Natural killer cell (primary cell): ENCODE measurements at regions of chr11 and their contacts with region 1.

Region 1: DNA sequence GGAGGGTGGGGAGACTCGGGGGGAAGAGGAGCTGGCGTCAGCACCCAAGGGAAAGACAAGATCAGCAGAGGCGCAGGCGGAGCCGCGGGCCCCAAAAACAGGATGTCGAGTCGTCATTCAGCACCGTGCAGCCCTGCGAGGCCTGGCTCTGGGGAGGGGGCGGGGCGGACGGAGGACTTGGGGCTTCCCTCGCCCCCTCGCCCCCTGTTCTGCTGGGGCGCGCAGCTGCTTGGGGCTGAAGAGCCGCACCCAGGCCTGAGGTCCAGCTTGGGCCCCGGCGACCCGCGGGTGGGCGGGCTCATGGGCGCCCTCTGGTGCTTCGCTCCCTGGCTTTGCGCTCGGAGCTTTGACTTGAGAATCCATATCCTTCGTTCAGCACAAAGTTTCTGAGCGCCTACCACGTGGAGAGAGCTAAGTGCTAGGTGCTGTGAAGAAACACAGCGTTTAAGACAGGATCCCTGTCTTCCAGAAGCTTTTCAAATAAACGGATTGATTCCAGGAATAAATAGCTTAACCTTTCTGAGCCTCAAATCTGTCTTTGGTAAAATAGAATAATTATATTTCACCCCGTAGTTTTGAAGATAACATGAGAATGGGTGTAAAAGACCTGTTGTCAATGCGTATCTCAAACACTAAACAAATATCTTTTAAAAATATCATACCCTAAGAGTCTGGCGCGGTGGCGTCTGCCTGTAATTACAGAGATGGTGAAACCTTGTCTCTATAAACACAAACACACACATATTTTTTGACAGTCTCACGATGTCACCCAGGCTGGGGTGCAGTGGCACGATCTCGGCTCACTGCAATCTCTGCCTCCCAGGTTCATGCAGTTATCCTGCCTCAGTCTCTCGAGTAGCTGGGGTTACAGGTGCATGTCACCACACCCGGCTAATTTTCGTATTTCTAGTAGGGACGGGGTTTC is 929 bp upstream of the RHOG start:
- DNase-seq: peak; percentile 89 to 97
- ATAC-seq: peak in 1 of 3 donors; percentile 86
- H3K4me3 ChIP-seq: peak overlapping the region; percentile 38
- H3K4me3 Mint-ChIP-seq: peak overlapping the region; percentile 90
- H3K27ac ChIP-seq: peak overlapping the region; percentile 97
- H3K27ac Mint-ChIP-seq: peak overlapping the region; percentile 90 to 95
- H3K4me1 ChIP-seq: peaks cover 43% of the 10 kb centered on the region
- H3K4me1 Mint-ChIP-seq: peaks cover 31 to 38% of the 10 kb centered on the region in 2 donors
- H3K27me3 ChIP-seq: no peaks in the 10 kb centered on the region
- H3K27me3 Mint-ChIP-seq: no peaks in the 10 kb centered on the region
- CTCF ChIP-seq: peak; percentile 77

Region 2: GRCh38 chr11:3797329-3798095 is 44.2 kb before region 1 on chr11 and contains the start of gene NUP98:
- intact Hi-C with region 1: loop called (anchors 1 kb)
- DNase-seq: peak; percentile 100
- ATAC-seq: peak; percentile 89 to 98 (median 91)
- H3K4me3 ChIP-seq: peak within 1 kb of the TSS; percentile 97
- H3K4me3 Mint-ChIP-seq: peak within 1 kb of the TSS; percentile 96
- H3K27ac ChIP-seq: peak within 1 kb of the TSS; percentile 99
- H3K27ac Mint-ChIP-seq: peak within 1 kb of the TSS; percentile 97 to 99
- H3K4me1 ChIP-seq: peaks cover 22% of the 10 kb centered on the region
- H3K4me1 Mint-ChIP-seq: peaks cover 34 to 37% of the 10 kb centered on the region in 2 donors
- H3K27me3 ChIP-seq: no peaks in the 10 kb centered on the region
- H3K27me3 Mint-ChIP-seq: no peaks in the 10 kb centered on the region
- CTCF ChIP-seq: no peak
- total RNA-seq, gene NUP98: 88.5 to 103 (median 92.8) TPM

Region 3: DNA sequence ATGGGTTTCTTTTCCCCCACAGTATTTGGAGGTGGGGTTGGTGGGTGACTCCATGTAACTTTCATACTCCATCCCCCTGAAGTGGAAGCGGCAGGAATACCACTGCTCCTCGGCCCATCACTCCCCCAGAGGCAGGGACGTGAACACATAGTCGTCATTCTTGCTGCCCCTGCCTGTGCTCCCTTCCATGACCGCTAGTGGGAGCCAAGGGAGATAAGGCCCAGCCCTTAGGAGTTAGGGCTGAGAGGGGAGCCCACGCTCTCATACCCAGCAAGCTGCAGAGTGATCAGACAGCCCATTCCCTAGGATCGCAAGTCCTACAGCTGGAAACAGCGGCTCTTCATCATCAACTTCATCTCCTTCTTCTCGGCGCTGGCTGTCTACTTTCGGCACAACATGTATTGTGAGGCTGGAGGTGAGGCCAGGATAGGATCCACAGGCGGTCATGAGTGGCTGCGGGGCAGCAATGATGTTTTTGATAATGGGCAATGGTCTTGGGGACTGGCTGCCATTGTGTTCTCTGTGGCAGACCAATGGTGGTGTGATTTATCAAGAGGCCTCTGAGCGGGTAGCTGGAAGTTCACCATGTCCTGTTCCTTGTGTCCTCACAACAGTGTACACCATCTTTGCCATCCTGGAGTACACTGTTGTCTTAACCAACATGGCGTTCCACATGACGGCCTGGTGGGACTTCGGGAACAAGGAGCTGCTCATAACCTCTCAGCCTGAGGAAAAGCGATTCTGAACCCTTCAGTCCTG is 16.8 kb before region 1 on chr11:
- intact Hi-C with region 1: loop called (anchors 2 kb)
- DNase-seq: peak; percentile 75 to 90
- ATAC-seq: peak; percentile 95 to 99 (median 96)
- H3K4me3 ChIP-seq: no peak overlapping the region
- H3K4me3 Mint-ChIP-seq: no peak overlapping the region
- H3K27ac ChIP-seq: peak overlapping the region; percentile 19
- H3K27ac Mint-ChIP-seq: peak overlapping the region; percentile 81 to 85
- H3K4me1 ChIP-seq: peaks cover 20% of the 10 kb centered on the region
- H3K4me1 Mint-ChIP-seq: peaks cover 36 to 37% of the 10 kb centered on the region in 2 donors
- H3K27me3 ChIP-seq: no peaks in the 10 kb centered on the region
- H3K27me3 Mint-ChIP-seq: no peaks in the 10 kb centered on the region
- CTCF ChIP-seq: peak; percentile 77

Region 4: DNA sequence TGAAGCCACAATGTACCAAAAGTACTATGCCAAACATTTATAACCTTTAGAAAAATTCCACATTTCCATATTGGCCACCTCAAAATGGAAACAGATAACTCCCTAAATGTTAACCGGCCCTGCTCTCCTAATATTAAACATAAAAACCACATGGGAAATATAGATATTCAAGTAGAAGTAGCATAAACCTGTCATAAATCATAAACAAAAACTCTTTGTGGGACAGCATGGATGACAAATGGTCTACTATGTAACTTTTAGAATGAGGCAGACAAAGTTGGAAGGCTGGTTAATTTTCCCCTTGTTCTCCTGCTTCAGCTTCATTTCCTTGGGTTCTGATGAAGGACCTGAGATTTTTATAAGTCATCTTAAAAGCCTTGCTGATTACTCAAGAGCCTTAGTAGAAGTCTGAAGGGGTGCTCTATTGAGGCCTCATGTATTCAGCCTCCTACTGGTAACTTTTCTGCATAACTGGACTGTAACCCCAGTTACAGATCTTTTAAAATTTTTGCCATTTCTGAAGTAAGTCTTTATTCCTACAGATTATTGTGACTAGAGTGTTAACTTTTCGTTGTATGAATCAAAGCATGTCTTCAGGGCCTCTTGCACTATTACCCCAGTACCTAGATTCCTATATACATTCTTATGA is 130.2 kb after region 1 on chr11:
- intact Hi-C with region 1: no loop called
- DNase-seq: peak in 1 of 2 donors; percentile 29
- ATAC-seq: peak in 2 of 3 donors; percentile 70 to 80
- H3K4me3 ChIP-seq: no peak overlapping the region
- H3K4me3 Mint-ChIP-seq: peak overlapping the region; percentile 22
- H3K27ac ChIP-seq: no peak overlapping the region
- H3K27ac Mint-ChIP-seq: peak overlapping the region; percentile 77 to 85
- H3K4me1 ChIP-seq: peaks cover 12% of the 10 kb centered on the region
- H3K4me1 Mint-ChIP-seq: peaks cover 76 to 81% of the 10 kb centered on the region in 2 donors
- H3K27me3 ChIP-seq: no peaks in the 10 kb centered on the region
- H3K27me3 Mint-ChIP-seq: no peaks in the 10 kb centered on the region
- CTCF ChIP-seq: peak; percentile 19